ENCODE measurements at regions of chr17 and their contacts with region 1.

Region 1: DNA sequence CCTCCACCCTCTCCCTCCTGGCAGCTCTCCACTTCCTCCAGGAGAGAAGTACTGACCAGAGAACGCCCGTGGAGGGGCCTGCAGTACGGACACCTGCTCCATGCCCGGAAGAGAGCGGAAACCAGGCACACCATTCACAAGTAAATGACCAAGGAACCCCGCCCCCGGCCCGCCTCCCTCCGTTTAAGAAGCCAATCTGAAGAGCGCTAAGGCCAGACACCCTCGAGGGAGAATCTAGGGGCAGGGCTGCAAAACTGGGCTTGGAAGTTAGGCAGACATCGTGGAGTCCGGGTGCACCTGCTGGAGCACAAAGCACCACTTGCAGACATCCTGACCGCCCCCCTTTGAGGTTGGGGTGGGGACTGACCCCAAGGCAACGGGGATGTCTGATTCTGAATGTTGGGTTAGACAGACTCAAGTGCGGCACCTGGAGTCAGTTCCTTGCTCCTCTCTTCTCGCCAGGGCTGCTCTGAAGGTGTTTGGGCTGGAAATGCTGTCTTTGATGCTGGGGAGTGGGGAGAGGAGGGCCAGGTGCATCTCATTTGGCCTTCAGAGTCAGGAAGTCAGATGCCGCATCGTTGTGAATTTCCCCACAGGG is 964 bp upstream of the FAAP100 start:
- DNase-seq: peak; percentile 92 to 97
- ATAC-seq: peak; percentile 75 to 84
- H3K4me3 ChIP-seq: peak overlapping the region; percentile 86
- H3K27ac ChIP-seq: peak overlapping the region; percentile 84 to 97
- H3K4me1 ChIP-seq: peaks cover 50% of the 10 kb centered on the region
- CTCF ChIP-seq: no peak
- EP300 ChIP-seq: no peak
- POLR2A ChIP-seq: peak; percentile 75
- RAD21 ChIP-seq: peak in 1 of 2 experiments; percentile 23; a peak in 3 of 5 replicates

Region 2: GRCh38 chr17:81519284-81519955 is 33.7 kb before region 1 on chr17:
- CTCF ChIA-PET with region 1: interaction called, 28 read pairs
- POLR2A ChIA-PET with region 1: interaction called, 3 read pairs
- DNase-seq: peak; percentile 61 to 66
- ATAC-seq: peak; percentile 42 to 48
- H3K4me3 ChIP-seq: peak overlapping the region; percentile 66
- H3K27ac ChIP-seq: peak overlapping the region; percentile 89 to 99
- H3K4me1 ChIP-seq: peaks cover 43% of the 10 kb centered on the region
- CTCF ChIP-seq: peak; percentile 62
- EP300 ChIP-seq: no peak; a peak in 1 of 5 replicates
- POLR2A ChIP-seq: peak; percentile 3
- RAD21 ChIP-seq: peak; percentile 47 to 67; a peak in 4 of 5 replicates

Region 3: GRCh38 chr17:81537343-81537855 is 15.7 kb before region 1 on chr17:
- CTCF ChIA-PET with region 1: interaction called, 29 read pairs
- POLR2A ChIA-PET with region 1: no interaction called
- DNase-seq: peak; percentile 67 to 77
- ATAC-seq: peak; percentile 19 to 61; a peak in 5 of 6 replicates
- H3K4me3 ChIP-seq: no peak overlapping the region
- H3K27ac ChIP-seq: no peak overlapping the region
- H3K4me1 ChIP-seq: peaks cover 11% of the 10 kb centered on the region; the same call in 1 of the 3 replicates
- CTCF ChIP-seq: peak; percentile 51
- EP300 ChIP-seq: no peak
- POLR2A ChIP-seq: no peak
- RAD21 ChIP-seq: peak; percentile 59 to 69; a peak in 4 of 5 replicates

Region 4: GRCh38 chr17:81566461-81567126 is 13.5 kb after region 1 on chr17:
- CTCF ChIA-PET with region 1: interaction called, 1,604 read pairs
- POLR2A ChIA-PET with region 1: interaction called, 15 read pairs
- DNase-seq: peak; percentile 85 to 89
- ATAC-seq: peak; percentile 85 to 91
- H3K4me3 ChIP-seq: peak overlapping the region; percentile 29; the same call in 2 of the 3 replicates
- H3K27ac ChIP-seq: peak overlapping the region; percentile 88 to 91
- H3K4me1 ChIP-seq: peaks cover 70% of the 10 kb centered on the region
- CTCF ChIP-seq: no peak
- EP300 ChIP-seq: peak; percentile 49 to 87; a peak in 3 of 5 replicates
- POLR2A ChIP-seq: no peak
- RAD21 ChIP-seq: peak; percentile 32 to 44

Region 5: GRCh38 chr17:81576621-81577277 is 23.6 kb after region 1 on chr17:
- CTCF ChIA-PET with region 1: interaction called, 1,604 read pairs
- POLR2A ChIA-PET with region 1: interaction called, 10 read pairs
- DNase-seq: peak; percentile 89 to 99
- ATAC-seq: peak; percentile 86 to 91
- H3K4me3 ChIP-seq: peak overlapping the region; percentile 21; the same call in 2 of the 3 replicates
- H3K27ac ChIP-seq: peak overlapping the region; percentile 93 to 95
- H3K4me1 ChIP-seq: peaks cover 76% of the 10 kb centered on the region
- CTCF ChIP-seq: 0 out of 3 replicates have a peak, but pooled peaks have one; percentile 13
- EP300 ChIP-seq: peak in 1 of 2 experiments; percentile 67; a peak in 2 of 5 replicates
- POLR2A ChIP-seq: no peak
- RAD21 ChIP-seq: peak; percentile 43 to 57; a peak in 4 of 5 replicates

Region 6: GRCh38 chr17:81607431-81607830 is 54.3 kb after region 1 on chr17:
- CTCF ChIA-PET with region 1: interaction called, 1,604 read pairs
- POLR2A ChIA-PET with region 1: no interaction called
- DNase-seq: no peak
- ATAC-seq: no peak
- H3K4me3 ChIP-seq: no peak overlapping the region
- H3K27ac ChIP-seq: no peak overlapping the region
- H3K4me1 ChIP-seq: no peaks in the 10 kb centered on the region
- CTCF ChIP-seq: no peak
- EP300 ChIP-seq: no peak
- POLR2A ChIP-seq: no peak
- RAD21 ChIP-seq: no peak